HEK293 (cell line): ENCODE measurements at regions of chr11 and their contacts with region 1.

Region 1: DNA sequence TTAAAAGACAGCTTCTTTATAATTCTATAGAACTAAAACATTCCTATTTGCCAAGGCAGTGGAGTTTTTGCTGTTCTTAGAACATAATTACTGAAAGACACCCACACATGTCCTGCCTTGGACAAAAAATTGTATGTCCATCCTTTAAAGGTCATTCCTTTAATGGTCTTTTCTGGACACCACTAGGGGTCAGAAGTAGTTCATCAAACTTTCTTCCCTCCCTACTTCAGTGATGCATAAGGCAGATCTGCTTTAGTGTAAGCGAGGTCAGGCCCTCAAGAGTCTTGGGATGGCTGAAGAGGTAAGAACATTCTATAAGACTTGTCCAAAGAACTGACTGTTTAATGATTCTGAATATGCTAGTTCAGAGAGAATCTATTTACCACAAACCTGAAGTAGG is 4.3 kb upstream of the OR51V1 start:
- H3K4me3 ChIP-seq: no peak overlapping the region
- H3K27ac ChIP-seq: no peak overlapping the region
- H3K4me1 ChIP-seq: no peaks in the 10 kb centered on the region
- CTCF ChIP-seq: no peak

Region 2: DNA sequence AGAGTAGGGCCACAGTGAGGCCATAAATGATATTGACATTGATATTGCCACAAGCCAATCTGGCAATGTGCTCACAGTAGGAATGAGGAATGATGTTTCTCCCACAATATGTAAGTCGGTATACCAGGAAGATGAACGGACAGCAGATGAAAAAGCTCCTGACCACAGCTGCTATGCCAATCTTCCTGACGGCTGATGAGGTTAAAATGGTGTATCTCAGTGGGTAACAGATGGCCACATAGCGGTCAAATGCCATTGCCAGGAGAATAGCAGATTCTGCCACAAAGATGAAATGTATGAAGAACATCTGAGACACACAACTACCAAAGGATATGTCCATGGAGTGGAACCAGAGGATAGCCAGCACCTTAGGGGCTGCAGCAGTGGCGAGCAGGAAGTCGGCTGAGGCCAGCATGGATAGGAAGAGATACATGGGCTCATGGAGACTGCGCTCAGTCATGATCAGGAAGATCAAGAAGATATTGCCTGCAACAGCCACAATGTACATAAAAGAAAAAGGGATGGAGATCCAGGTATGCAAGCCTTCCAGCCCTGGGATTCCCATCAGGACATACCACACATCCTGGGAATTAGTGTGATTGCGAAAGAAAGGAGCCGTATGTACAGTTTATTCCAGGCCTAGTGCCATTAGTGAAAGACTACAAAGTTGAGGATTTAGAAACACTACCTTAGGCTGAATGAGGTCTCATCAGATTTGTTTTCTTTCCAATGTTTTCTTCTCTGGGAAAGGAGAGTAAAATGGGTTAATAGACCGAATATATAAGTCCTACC is 26.5 kb before region 1 on chr11:
- CTCF ChIA-PET with region 1: no interaction called
- POLR2A ChIA-PET with region 1: no interaction called
- H3K4me3 ChIP-seq: no peak overlapping the region
- H3K27ac ChIP-seq: no peak overlapping the region
- H3K4me1 ChIP-seq: no peaks in the 10 kb centered on the region
- CTCF ChIP-seq: no peak

Region 3: GRCh38 chr11:5291207-5291838 is 86.5 kb after region 1 on chr11:
- CTCF ChIA-PET with region 1: interaction called, 12 read pairs
- POLR2A ChIA-PET with region 1: interaction called, 3 read pairs
- H3K4me3 ChIP-seq: no peak overlapping the region
- H3K27ac ChIP-seq: no peak overlapping the region
- H3K4me1 ChIP-seq: no peaks in the 10 kb centered on the region
- CTCF ChIP-seq: no peak